ENCODE measurements at regions of chr9 and their contacts with region 1.

Region 1: DNA sequence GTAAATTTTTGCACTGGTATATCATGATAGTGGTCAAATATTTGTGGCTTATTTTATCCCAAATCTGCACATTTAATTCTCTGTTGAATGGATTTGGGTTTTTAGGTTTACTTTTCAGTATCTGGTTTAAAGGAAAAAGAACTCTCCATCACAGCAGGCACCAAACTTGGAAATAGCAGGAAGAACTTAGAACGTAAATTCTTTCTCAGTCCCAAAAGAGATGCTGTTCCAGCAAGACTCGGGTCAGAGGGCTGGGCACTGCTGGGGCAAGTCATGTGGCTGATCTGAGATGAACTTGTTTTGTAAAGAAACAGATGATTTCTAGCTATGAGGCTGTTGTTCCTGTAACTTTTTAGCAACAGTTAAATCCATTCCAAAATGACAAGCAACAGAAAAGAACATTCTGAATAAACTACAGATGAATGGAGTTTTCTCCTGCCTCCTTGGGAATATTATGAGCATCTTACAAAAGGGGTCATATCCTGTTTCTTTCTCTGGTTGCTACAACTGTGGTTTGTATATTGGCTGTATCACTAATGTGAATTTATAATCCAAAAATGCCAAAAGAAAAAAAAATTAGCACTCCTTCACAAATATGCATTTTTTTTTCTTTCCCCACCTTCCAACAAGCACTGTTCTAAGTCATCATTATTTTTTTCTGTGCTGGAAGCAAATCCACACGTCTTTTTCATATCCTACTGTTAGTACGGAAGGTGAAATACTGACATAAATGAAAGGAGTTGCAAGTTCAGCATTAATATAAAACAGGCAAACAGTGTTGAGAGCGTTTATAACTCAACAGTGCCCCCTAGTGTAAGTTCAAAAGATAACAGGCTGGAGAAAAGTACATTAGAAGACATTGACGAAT is 31.1 kb downstream of the OR2K2 start:
- DNase-seq: peak in 1 of 2 experiments; percentile 43
- H3K4me3 ChIP-seq: no peak overlapping the region
- H3K4me1 ChIP-seq: no peaks in the 10 kb centered on the region
- H3K27me3 ChIP-seq: no peaks in the 10 kb centered on the region

Region 2: GRCh38 chr9:110183208-110184145 is 1115.5 kb before region 1 on chr9:
- in situ Hi-C with region 1: loop called (anchors 25 kb)
- DNase-seq: peak; percentile 46 to 76
- H3K4me3 ChIP-seq: no peak overlapping the region
- H3K4me1 ChIP-seq: no peaks in the 10 kb centered on the region
- H3K27me3 ChIP-seq: no peaks in the 10 kb centered on the region

Region 3: GRCh38 chr9:110626101-110626829 is 672.7 kb before region 1 on chr9:
- in situ Hi-C with region 1: loop called (anchors 25 kb)
- DNase-seq: no peak
- H3K4me3 ChIP-seq: no peak overlapping the region
- H3K4me1 ChIP-seq: no peaks in the 10 kb centered on the region
- H3K27me3 ChIP-seq: no peaks in the 10 kb centered on the region

Region 4: GRCh38 chr9:111037381-111038305 is 261.3 kb before region 1 on chr9:
- in situ Hi-C with region 1: loop called (anchors 25 kb)
- DNase-seq: peak in 1 of 2 experiments; percentile 43
- H3K4me3 ChIP-seq: peak overlapping the region; percentile 13
- H3K4me1 ChIP-seq: no peaks in the 10 kb centered on the region
- H3K27me3 ChIP-seq: peaks cover 36% of the 10 kb centered on the region